CD14-positive monocyte (primary cell): ENCODE measurements at regions of chr2 and their contacts with region 1.

Region 1: GRCh38 chr2:70301344-70302194 is at the start of gene FAM136A:
- DNase-seq: peak; percentile 73 to 78 (median 74)
- H3K4me3 ChIP-seq: peak within 1 kb of the TSS; percentile 66 to 93 (median 89)
- H3K4me3 Mint-ChIP-seq: peak within 1 kb of the TSS; percentile 93 to 96
- H3K27ac ChIP-seq: peak within 1 kb of the TSS; percentile 52 to 78
- H3K27ac Mint-ChIP-seq: peak within 1 kb of the TSS in 6 of 7 donors; percentile 68 to 91 (median 88)
- H3K4me1 ChIP-seq: peaks cover 6 to 8% of the 10 kb centered on the region in 2 donors
- H3K4me1 Mint-ChIP-seq: peaks cover 13% of the 10 kb centered on the region
- H3K27me3 ChIP-seq: no peaks in the 10 kb centered on the region
- H3K27me3 Mint-ChIP-seq: peaks cover 0 to 6% (median 1%) of the 10 kb centered on the region in 3 donors
- CTCF ChIP-seq: peak; percentile 94
- polyA plus RNA-seq, gene FAM136A: 26.1 to 31.8 (median 30.1) TPM

Region 2: DNA sequence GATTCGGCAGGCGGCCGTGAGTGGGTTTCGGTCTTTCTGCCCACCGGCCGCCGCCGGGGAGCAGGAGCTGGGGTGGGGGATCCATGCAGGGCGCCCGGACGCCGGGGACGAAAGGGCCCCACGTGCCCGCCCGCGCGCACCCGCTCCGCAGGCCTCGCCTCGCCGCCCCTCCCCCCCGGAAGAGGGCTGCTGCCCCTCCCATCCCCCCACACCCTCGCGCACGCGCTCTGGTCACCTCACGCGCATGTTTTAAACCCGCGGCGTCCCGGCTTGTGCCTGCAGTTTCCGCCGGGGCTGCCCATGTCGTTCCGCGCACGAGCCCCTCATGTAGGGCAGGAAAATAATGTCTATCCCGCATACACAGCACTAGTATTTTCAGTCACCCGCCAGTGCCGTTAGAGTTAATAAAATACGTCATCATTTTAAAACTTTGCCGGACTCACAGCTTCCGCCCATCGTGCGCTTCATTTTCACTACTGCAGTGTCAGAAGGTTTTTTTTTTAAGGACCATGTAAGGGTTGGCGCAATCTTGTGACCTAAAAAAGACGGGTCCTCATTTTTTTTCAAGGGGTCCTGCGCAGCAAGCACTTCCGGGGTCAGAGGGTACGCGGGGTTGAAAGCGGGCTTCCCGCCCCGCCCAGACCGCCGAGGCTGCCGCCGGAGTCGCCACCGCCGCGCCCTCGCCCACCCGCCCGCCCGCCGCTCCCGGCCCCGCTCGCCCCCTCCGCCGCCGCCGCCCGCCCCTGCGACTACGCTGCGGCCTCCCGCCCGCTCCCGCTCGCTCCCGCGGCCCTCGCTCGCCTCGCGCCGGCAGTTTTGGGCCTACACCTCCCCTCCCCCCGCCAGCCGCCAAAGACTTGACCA is 214.5 kb before region 1 on chr2 and contains the start of gene PCBP1:
- intact Hi-C with region 1: loop called in 1 of 2 experiments (anchors 10 kb)
- DNase-seq: peak; percentile 87 to 93 (median 93)
- H3K4me3 ChIP-seq: peak within 1 kb of the TSS; percentile 94 to 100 (median 95)
- H3K4me3 Mint-ChIP-seq: peak within 1 kb of the TSS; percentile 98 to 99
- H3K27ac ChIP-seq: peak within 1 kb of the TSS; percentile 99
- H3K27ac Mint-ChIP-seq: peak within 1 kb of the TSS; percentile 100
- H3K4me1 ChIP-seq: peaks cover 55 to 67% of the 10 kb centered on the region in 2 donors
- H3K4me1 Mint-ChIP-seq: peaks cover 56% of the 10 kb centered on the region
- H3K27me3 ChIP-seq: no peaks in the 10 kb centered on the region
- H3K27me3 Mint-ChIP-seq: peaks cover 0 to 5% (median 0%) of the 10 kb centered on the region in 3 donors
- CTCF ChIP-seq: no peak
- polyA plus RNA-seq, gene PCBP1: 178 to 299 (median 194) TPM

Region 3: GRCh38 chr2:70142590-70143313 is 158.8 kb before region 1 on chr2:
- intact Hi-C with region 1: no loop called
- DNase-seq: peak; percentile 98 to 100 (median 100)
- H3K4me3 ChIP-seq: peak overlapping the region; percentile 45 to 79 (median 46)
- H3K4me3 Mint-ChIP-seq: peak overlapping the region; percentile 77 to 89
- H3K27ac ChIP-seq: peak overlapping the region; percentile 80 to 98
- H3K27ac Mint-ChIP-seq: peak overlapping the region; percentile 94 to 100 (median 99)
- H3K4me1 ChIP-seq: peaks cover 32 to 42% of the 10 kb centered on the region in 2 donors
- H3K4me1 Mint-ChIP-seq: peaks cover 33% of the 10 kb centered on the region
- H3K27me3 ChIP-seq: no peaks in the 10 kb centered on the region
- H3K27me3 Mint-ChIP-seq: peaks cover 0 to 5% (median 1%) of the 10 kb centered on the region in 3 donors
- CTCF ChIP-seq: peak; percentile 87

Region 4: GRCh38 chr2:70190418-70191243 is 110.9 kb before region 1 on chr2 and contains the start of gene C2orf42:
- intact Hi-C with region 1: loop called in 1 of 2 experiments (anchors 10 kb)
- DNase-seq: peak; percentile 90 to 95 (median 94)
- H3K4me3 ChIP-seq: peak within 1 kb of the TSS; percentile 84 to 98 (median 96)
- H3K4me3 Mint-ChIP-seq: peak within 1 kb of the TSS; percentile 84 to 94
- H3K27ac ChIP-seq: peak within 1 kb of the TSS; percentile 89 to 94
- H3K27ac Mint-ChIP-seq: peak within 1 kb of the TSS; percentile 90 to 99 (median 98)
- H3K4me1 ChIP-seq: peaks cover 12 to 17% of the 10 kb centered on the region in 2 donors
- H3K4me1 Mint-ChIP-seq: peaks cover 14% of the 10 kb centered on the region
- H3K27me3 ChIP-seq: no peaks in the 10 kb centered on the region
- H3K27me3 Mint-ChIP-seq: peaks cover 0 to 4% (median 2%) of the 10 kb centered on the region in 3 donors
- CTCF ChIP-seq: no peak
- polyA plus RNA-seq, gene C2orf42: 3.0 to 5.5 (median 4.0) TPM